GM10248 (cell line): ENCODE measurements at regions of chr17 and their contacts with region 1.

Region 1: GRCh38 chr17:30031214-30031869 is 85.3 kb upstream of the NSRP1 start:
- DNase-seq: peak; percentile 18
- CTCF ChIP-seq: no peak

Region 2: GRCh38 chr17:30041551-30041950 is 10.2 kb after region 1 on chr17:
- CTCF ChIA-PET with region 1: interaction called, 11 read pairs
- POLR2A ChIA-PET with region 1: no interaction called
- DNase-seq: no peak
- CTCF ChIP-seq: no peak

Region 3: GRCh38 chr17:30093463-30094147 is 62.3 kb after region 1 on chr17:
- CTCF ChIA-PET with region 1: interaction called, 41 read pairs
- POLR2A ChIA-PET with region 1: no interaction called
- DNase-seq: peak; percentile 72
- CTCF ChIP-seq: peak; percentile 79